B cell (primary cell): ENCODE measurements at regions of chr3 and their contacts with region 1.

Region 1: GRCh38 chr3:4350789-4351163 is 47.6 kb downstream of the SETMAR start:
- DNase-seq: peak; percentile 73
- ATAC-seq: peak; percentile 74
- H3K4me3 ChIP-seq: peak overlapping the region in 4 of 5 experiments; percentile 7 to 54 (median 47)
- H3K4me3 Mint-ChIP-seq: peak overlapping the region; percentile 62
- H3K27ac ChIP-seq: no peak overlapping the region
- H3K27ac Mint-ChIP-seq: no peak overlapping the region
- H3K4me1 ChIP-seq: peaks cover 4 to 6% of the 10 kb centered on the region in 2 donors
- H3K4me1 Mint-ChIP-seq: peaks cover 9% of the 10 kb centered on the region
- H3K27me3 ChIP-seq: no peaks in the 10 kb centered on the region
- H3K27me3 Mint-ChIP-seq: no peaks in the 10 kb centered on the region
- CTCF ChIP-seq: peak; percentile 89

Region 2: DNA sequence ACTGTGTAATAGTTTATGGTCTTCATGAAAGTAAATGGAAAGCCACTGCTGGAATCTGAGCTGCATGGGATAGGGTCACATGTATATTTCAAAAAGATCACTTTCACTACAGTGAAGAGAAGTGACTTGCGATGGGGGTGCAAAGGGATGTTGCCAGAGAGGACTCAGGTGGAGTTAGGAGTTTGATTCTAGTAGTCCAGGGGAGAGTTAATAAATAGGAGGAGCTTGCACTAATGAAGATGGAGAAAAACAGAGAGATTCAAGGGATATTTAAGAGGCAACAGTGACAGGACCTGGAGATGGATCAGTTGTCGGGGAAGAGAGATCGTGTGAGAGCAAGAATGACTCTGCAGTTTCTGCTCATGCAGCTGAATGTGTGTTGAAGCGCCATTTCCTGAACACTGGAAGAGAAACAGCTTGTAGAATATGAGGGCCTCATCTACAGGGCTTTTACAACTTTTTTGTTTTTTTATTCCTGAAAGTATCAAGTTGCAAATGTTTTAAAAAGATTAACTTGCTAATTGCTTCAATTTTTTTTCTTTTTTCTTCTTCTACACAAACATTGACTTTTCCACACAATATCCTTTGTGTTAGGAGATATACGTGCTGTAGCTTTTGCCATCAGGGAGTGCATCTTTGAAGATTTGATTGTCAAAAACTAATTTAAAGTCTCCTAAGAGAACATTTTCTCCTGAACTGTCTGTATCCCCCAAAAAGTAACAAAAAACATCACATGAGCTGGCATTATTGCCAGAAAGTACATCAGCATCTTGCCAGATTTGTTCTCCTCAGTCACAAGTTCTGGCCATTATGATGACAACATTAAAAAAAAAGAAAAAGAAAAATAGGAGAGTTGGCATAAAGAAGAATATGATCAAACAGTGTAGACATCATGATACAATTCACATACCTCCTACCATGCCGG is 10.1 kb before region 1 on chr3:
- CTCF ChIA-PET with region 1: interaction called, 33 read pairs
- POLR2A ChIA-PET with region 1: no interaction called
- intact Hi-C with region 1: no loop called
- DNase-seq: no peak
- ATAC-seq: no peak
- H3K4me3 ChIP-seq: no peak overlapping the region
- H3K4me3 Mint-ChIP-seq: no peak overlapping the region
- H3K27ac ChIP-seq: no peak overlapping the region
- H3K27ac Mint-ChIP-seq: no peak overlapping the region
- H3K4me1 ChIP-seq: no peaks in the 10 kb centered on the region
- H3K4me1 Mint-ChIP-seq: no peaks in the 10 kb centered on the region
- H3K27me3 ChIP-seq: no peaks in the 10 kb centered on the region
- H3K27me3 Mint-ChIP-seq: no peaks in the 10 kb centered on the region
- CTCF ChIP-seq: no peak

Region 3: GRCh38 chr3:4517643-4518311 is 167.0 kb after region 1 on chr3:
- CTCF ChIA-PET with region 1: interaction called, 11 read pairs
- POLR2A ChIA-PET with region 1: no interaction called
- intact Hi-C with region 1: no loop called
- DNase-seq: no peak
- ATAC-seq: peak; percentile 36
- H3K4me3 ChIP-seq: no peak overlapping the region
- H3K4me3 Mint-ChIP-seq: peak overlapping the region; percentile 32
- H3K27ac ChIP-seq: peak overlapping the region in 1 of 2 donors; percentile 70
- H3K27ac Mint-ChIP-seq: peak overlapping the region; percentile 73
- H3K4me1 ChIP-seq: peaks cover 55 to 58% of the 10 kb centered on the region in 2 donors
- H3K4me1 Mint-ChIP-seq: peaks cover 72% of the 10 kb centered on the region
- H3K27me3 ChIP-seq: no peaks in the 10 kb centered on the region
- H3K27me3 Mint-ChIP-seq: no peaks in the 10 kb centered on the region
- CTCF ChIP-seq: no peak

Region 4: DNA sequence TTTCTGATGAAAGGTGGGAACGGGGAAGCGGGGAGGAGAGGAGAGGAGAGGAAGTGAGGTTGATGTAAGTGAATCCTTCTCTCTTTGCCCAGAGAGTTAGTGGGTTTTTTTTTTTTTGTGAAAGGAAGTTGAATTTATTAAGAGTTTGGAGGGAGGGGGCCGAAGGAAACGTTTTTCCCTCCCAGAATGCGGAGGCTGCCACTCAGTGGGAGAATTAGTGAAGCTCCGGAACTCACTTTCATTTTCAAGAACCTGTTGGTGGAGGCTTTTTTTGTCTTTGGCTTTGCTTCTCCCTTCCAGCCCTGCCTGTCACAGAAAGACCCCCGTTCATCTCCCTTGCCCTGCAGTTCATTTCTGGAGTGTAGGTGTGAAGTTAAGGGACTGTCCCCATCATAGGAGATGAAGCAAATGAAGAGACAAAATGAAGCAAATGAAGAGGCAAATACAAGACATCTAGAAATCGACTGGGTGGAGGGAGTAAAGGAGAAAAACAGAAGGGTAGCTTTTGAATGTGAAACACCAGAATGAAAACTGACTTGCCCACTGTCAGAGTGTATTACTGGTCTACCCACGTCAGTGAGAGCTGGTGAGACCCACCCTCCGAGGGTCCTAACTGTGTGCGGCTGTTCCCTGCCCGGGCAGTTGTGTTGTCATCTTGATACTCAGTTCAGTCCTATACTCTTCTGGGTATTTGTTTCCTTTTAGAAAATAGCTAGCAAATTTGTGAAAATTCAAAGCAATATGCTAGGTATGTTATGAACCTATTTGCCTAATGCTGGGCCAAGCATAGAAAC is 233.9 kb after region 1 on chr3:
- CTCF ChIA-PET with region 1: interaction called, 21 read pairs
- POLR2A ChIA-PET with region 1: no interaction called
- intact Hi-C with region 1: no loop called
- DNase-seq: peak; percentile 23
- ATAC-seq: peak; percentile 43
- H3K4me3 ChIP-seq: peak overlapping the region in 4 of 5 experiments; percentile 0 to 31 (median 14)
- H3K4me3 Mint-ChIP-seq: peak overlapping the region; percentile 87
- H3K27ac ChIP-seq: peak overlapping the region; percentile 28 to 56
- H3K27ac Mint-ChIP-seq: peak overlapping the region; percentile 88
- H3K4me1 ChIP-seq: peaks cover 60 to 68% of the 10 kb centered on the region in 2 donors
- H3K4me1 Mint-ChIP-seq: peaks cover 88% of the 10 kb centered on the region
- H3K27me3 ChIP-seq: no peaks in the 10 kb centered on the region
- H3K27me3 Mint-ChIP-seq: no peaks in the 10 kb centered on the region
- CTCF ChIP-seq: no peak

Region 5: DNA sequence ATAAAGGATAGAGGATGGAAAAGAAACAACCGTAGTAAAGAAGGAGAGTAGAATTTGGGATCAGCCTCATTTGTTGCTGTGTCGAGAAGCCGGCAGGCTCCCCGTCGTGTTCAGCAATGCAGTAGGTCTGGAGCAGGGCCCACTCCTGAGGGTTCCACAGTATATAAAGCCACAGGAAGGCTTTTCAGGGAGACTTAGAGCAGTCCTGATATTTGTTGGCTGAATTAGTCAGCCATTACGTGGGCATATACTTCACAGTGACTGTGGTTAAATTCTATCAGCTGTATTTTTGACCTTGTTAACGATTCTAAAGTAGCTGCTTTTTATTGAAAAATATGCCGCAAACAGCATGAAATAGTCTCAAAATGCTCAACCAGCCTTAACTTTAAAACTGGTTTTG is 291.8 kb after region 1 on chr3:
- CTCF ChIA-PET with region 1: interaction called, 279 read pairs
- POLR2A ChIA-PET with region 1: no interaction called
- intact Hi-C with region 1: no loop called
- DNase-seq: no peak
- ATAC-seq: no peak
- H3K4me3 ChIP-seq: no peak overlapping the region
- H3K4me3 Mint-ChIP-seq: no peak overlapping the region
- H3K27ac ChIP-seq: no peak overlapping the region
- H3K27ac Mint-ChIP-seq: no peak overlapping the region
- H3K4me1 ChIP-seq: no peaks in the 10 kb centered on the region
- H3K4me1 Mint-ChIP-seq: no peaks in the 10 kb centered on the region
- H3K27me3 ChIP-seq: no peaks in the 10 kb centered on the region
- H3K27me3 Mint-ChIP-seq: no peaks in the 10 kb centered on the region
- CTCF ChIP-seq: no peak